B cell (primary cell): ENCODE measurements at regions of chr5 and their contacts with region 1.

Region 1: GRCh38 chr5:62305715-62306322 is at the start of gene KIF2A:
- DNase-seq: peak; percentile 97
- ATAC-seq: peak; percentile 87
- H3K4me3 ChIP-seq: peak within 1 kb of the TSS; percentile 76 to 95 (median 86)
- H3K4me3 Mint-ChIP-seq: peak within 1 kb of the TSS; percentile 96
- H3K27ac ChIP-seq: peak within 1 kb of the TSS; percentile 88 to 95
- H3K27ac Mint-ChIP-seq: peak within 1 kb of the TSS; percentile 98
- H3K4me1 ChIP-seq: peaks cover 21 to 25% of the 10 kb centered on the region in 2 donors
- H3K4me1 Mint-ChIP-seq: peaks cover 39% of the 10 kb centered on the region
- H3K27me3 ChIP-seq: no peaks in the 10 kb centered on the region
- H3K27me3 Mint-ChIP-seq: no peaks in the 10 kb centered on the region
- CTCF ChIP-seq: no peak
- total RNA-seq, gene KIF2A: 51.7 and 59.0 TPM in 2 replicates

Region 2: DNA sequence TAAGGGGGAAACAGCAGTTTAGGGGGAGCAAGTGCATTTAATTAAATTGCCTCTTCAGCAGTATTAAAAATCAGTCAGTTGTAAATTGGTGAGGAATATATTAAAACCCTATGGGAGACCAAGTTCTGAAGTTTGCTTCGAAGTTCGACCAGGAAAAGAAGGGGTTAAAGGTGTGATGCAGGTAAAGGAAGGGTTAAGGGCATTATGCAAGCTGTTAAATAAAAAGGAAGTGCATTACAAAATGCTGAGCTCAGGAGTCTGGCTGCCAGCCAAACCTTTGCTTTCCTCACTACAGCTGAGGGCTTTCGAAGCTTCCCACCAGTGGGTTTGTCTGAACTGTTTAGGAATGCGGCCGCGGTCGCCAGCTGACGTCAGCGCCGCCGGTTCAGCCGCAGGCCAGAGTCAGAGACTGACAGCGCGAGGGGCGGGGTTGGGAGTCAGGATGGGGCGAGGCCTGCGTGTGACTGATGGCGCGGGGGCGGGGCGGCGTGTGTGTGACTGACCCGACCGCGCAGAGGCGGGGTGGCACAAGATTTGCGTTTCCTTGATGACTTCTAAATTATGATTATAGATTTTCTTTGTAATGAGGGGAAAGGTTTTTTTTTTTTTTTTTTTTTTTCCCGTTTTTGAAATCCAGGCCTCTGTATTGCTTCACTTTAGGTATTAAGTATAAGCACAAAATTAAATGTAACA is 897.2 kb before region 1 on chr5:
- CTCF ChIA-PET with region 1: no interaction called
- POLR2A ChIA-PET with region 1: no interaction called
- intact Hi-C with region 1: loop called (anchors 5 kb)
- DNase-seq: peak; percentile 98
- ATAC-seq: peak; percentile 98
- H3K4me3 ChIP-seq: peak overlapping the region; percentile 34 to 58 (median 42)
- H3K4me3 Mint-ChIP-seq: peak overlapping the region; percentile 90
- H3K27ac ChIP-seq: peak overlapping the region in 1 of 2 donors; percentile 51
- H3K27ac Mint-ChIP-seq: peak overlapping the region; percentile 95
- H3K4me1 ChIP-seq: peaks cover 16 to 17% of the 10 kb centered on the region in 2 donors
- H3K4me1 Mint-ChIP-seq: peaks cover 35% of the 10 kb centered on the region
- H3K27me3 ChIP-seq: no peaks in the 10 kb centered on the region
- H3K27me3 Mint-ChIP-seq: no peaks in the 10 kb centered on the region
- CTCF ChIP-seq: no peak

Region 3: DNA sequence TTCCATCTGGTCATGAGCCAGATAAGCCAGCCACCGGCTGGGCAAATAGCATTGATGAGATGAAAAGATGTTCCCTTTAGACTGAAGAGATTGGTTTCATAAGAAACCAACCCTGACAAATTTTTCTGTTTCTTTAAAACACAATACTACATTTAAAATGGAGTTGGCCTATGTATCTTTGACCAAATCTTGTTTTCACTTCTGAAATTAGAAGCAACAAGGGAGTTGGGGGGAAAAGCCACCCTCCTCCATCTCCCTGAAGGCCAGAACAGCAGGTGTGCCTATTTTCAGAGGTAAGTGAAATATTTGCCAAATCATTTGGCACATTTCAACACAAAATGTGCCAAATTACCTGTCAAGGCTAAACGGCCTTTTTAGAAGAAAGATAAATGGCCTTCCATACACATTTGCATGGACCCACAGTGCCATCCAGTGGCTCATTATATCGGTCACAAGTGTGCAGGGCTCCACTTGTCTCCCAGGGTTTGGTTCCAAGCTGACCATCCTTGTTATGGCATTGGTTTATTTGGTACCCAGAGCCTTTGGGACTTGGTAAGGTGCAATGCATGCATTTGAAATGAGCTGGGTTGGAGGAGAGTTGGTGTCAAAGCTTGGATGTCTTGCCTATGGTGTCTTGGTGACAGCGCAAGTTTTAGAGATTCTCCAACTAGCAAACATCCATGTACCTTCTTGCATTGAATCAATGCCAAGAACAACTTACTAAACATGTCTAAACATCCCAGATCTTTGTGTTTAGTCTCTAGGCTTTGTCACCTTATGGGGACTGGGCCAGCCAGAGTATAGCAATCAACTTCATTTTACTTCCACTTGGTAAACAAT is 371.8 kb before region 1 on chr5:
- CTCF ChIA-PET with region 1: no interaction called
- POLR2A ChIA-PET with region 1: no interaction called
- intact Hi-C with region 1: no loop called
- DNase-seq: peak; percentile 9
- ATAC-seq: no peak
- H3K4me3 ChIP-seq: no peak overlapping the region
- H3K4me3 Mint-ChIP-seq: no peak overlapping the region
- H3K27ac ChIP-seq: no peak overlapping the region
- H3K27ac Mint-ChIP-seq: no peak overlapping the region
- H3K4me1 ChIP-seq: no peaks in the 10 kb centered on the region
- H3K4me1 Mint-ChIP-seq: no peaks in the 10 kb centered on the region
- H3K27me3 ChIP-seq: no peaks in the 10 kb centered on the region
- H3K27me3 Mint-ChIP-seq: peaks cover 3% of the 10 kb centered on the region
- CTCF ChIP-seq: no peak

Region 4: GRCh38 chr5:62354028-62354874 is 48.4 kb after region 1 on chr5:
- CTCF ChIA-PET with region 1: interaction called, 13 read pairs
- POLR2A ChIA-PET with region 1: no interaction called
- intact Hi-C with region 1: loop called (anchors 2 kb)
- DNase-seq: peak; percentile 66
- ATAC-seq: peak; percentile 62
- H3K4me3 ChIP-seq: no peak overlapping the region
- H3K4me3 Mint-ChIP-seq: no peak overlapping the region
- H3K27ac ChIP-seq: no peak overlapping the region
- H3K27ac Mint-ChIP-seq: no peak overlapping the region
- H3K4me1 ChIP-seq: no peaks in the 10 kb centered on the region
- H3K4me1 Mint-ChIP-seq: no peaks in the 10 kb centered on the region
- H3K27me3 ChIP-seq: no peaks in the 10 kb centered on the region
- H3K27me3 Mint-ChIP-seq: no peaks in the 10 kb centered on the region
- CTCF ChIP-seq: peak; percentile 84

Region 5: GRCh38 chr5:62403434-62404250 is 97.8 kb after region 1 on chr5 and contains the start of gene DIMT1:
- CTCF ChIA-PET with region 1: interaction called, 16 read pairs
- POLR2A ChIA-PET with region 1: interaction called, 7 read pairs
- intact Hi-C with region 1: loop called (anchors 1 kb)
- DNase-seq: peak; percentile 93
- ATAC-seq: peak; percentile 99
- H3K4me3 ChIP-seq: peak within 1 kb of the TSS; percentile 92 to 98 (median 97)
- H3K4me3 Mint-ChIP-seq: peak within 1 kb of the TSS; percentile 100
- H3K27ac ChIP-seq: peak within 1 kb of the TSS; percentile 93 to 95
- H3K27ac Mint-ChIP-seq: peak within 1 kb of the TSS; percentile 87
- H3K4me1 ChIP-seq: peaks cover 5 to 16% of the 10 kb centered on the region in 2 donors
- H3K4me1 Mint-ChIP-seq: peaks cover 22% of the 10 kb centered on the region
- H3K27me3 ChIP-seq: no peaks in the 10 kb centered on the region
- H3K27me3 Mint-ChIP-seq: no peaks in the 10 kb centered on the region
- CTCF ChIP-seq: no peak
- total RNA-seq, gene DIMT1: 19.5 and 20.7 TPM in 2 replicates

Region 6: DNA sequence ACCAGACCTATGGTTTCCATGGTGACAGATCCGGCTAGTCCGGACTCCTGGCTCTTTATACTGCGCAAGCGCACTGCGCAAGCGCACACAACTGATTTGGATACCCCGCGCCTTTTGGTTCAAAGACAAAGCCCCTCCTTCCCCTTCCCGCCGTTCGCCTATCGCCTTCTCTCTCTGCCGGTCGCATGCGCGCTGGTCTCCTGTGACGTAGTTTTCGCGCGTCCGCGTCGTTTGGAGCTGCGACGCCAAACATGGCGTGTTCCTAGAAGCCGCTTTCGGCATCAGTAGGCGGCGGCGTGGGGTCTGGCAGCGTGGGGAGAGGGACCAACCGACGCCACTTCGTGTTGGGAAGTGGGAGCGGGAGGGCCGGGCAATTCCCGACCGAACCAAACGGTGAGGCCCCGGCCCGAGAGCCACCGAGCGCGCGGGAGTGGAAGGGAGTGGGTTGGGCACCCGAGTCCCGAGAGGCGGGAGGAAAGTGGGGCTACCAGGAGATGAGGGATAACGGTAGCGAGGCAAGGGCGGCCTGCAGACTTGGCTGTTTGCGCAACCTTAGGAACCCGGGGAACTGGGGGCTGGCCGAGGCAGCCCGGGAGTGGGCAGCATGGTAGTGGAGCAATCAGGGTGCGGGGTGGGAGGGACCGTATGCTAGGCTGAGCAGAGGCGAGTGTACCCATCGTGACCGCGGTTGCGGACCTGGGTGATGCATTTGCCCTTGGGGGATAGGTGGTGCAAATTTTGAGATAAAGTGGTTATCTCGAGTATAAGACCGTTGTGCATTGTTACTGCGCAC is 106.9 kb after region 1 on chr5 and contains the start of gene IPO11:
- CTCF ChIA-PET with region 1: no interaction called
- POLR2A ChIA-PET with region 1: interaction called, 6 read pairs
- intact Hi-C with region 1: loop called (anchors 1 kb)
- DNase-seq: peak; percentile 99
- ATAC-seq: peak; percentile 96
- H3K4me3 ChIP-seq: peak within 1 kb of the TSS; percentile 67 to 97 (median 80)
- H3K4me3 Mint-ChIP-seq: peak within 1 kb of the TSS; percentile 84
- H3K27ac ChIP-seq: peak within 1 kb of the TSS; percentile 72 to 85
- H3K27ac Mint-ChIP-seq: peak within 1 kb of the TSS; percentile 91
- H3K4me1 ChIP-seq: peaks cover 13 to 15% of the 10 kb centered on the region in 2 donors
- H3K4me1 Mint-ChIP-seq: peaks cover 17% of the 10 kb centered on the region
- H3K27me3 ChIP-seq: no peaks in the 10 kb centered on the region
- H3K27me3 Mint-ChIP-seq: no peaks in the 10 kb centered on the region
- CTCF ChIP-seq: no peak
- total RNA-seq, gene IPO11: 37.2 and 37.4 TPM in 2 replicates